Natural killer cell (primary cell): ENCODE measurements at regions of chr5 and their contacts with region 1.

Region 1: GRCh38 chr5:89168766-89169165 is 285.8 kb upstream of the MEF2C start:
- DNase-seq: no peak
- ATAC-seq: no peak
- H3K4me3 ChIP-seq: no peak overlapping the region
- H3K4me3 Mint-ChIP-seq: no peak overlapping the region
- H3K27ac ChIP-seq: no peak overlapping the region
- H3K27ac Mint-ChIP-seq: no peak overlapping the region
- H3K4me1 ChIP-seq: no peaks in the 10 kb centered on the region
- H3K4me1 Mint-ChIP-seq: peaks cover 0 to 9% of the 10 kb centered on the region in 2 donors
- H3K27me3 ChIP-seq: no peaks in the 10 kb centered on the region
- H3K27me3 Mint-ChIP-seq: no peaks in the 10 kb centered on the region
- CTCF ChIP-seq: no peak

Region 2: GRCh38 chr5:89117124-89117644 is 51.6 kb before region 1 on chr5:
- intact Hi-C with region 1: no loop called
- DNase-seq: no peak
- ATAC-seq: peak in 1 of 3 donors; percentile 52
- H3K4me3 ChIP-seq: no peak overlapping the region
- H3K4me3 Mint-ChIP-seq: no peak overlapping the region
- H3K27ac ChIP-seq: no peak overlapping the region
- H3K27ac Mint-ChIP-seq: no peak overlapping the region
- H3K4me1 ChIP-seq: peaks cover 3% of the 10 kb centered on the region
- H3K4me1 Mint-ChIP-seq: peaks cover 0 to 8% of the 10 kb centered on the region in 2 donors
- H3K27me3 ChIP-seq: no peaks in the 10 kb centered on the region
- H3K27me3 Mint-ChIP-seq: no peaks in the 10 kb centered on the region
- CTCF ChIP-seq: no peak

Region 3: DNA sequence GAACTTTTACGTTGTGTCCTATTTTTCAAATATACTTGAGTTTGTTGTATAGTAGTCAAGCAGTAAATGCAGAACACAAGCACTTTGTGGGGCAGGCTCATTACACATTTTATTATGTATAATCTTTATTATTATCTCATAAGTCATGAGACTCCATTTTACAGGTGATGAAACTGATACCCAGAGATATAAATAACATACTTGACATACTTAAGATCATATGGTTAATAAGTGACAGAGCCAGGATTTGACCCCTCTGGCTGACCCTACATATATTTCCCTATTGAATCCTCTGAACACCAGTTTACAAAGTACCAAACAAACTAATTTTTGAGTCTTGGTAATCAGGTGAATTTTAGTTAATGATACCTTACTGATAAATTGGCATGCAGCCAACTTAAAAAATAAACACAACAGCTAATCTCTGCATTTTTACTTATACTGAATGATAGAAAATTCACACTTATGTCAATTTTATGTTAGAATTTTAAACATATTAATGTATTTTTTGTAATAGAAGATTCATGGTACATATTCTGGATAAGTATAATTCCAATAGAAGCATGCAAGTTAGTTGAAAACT is 19.2 kb after region 1 on chr5:
- intact Hi-C with region 1: no loop called
- DNase-seq: no peak
- ATAC-seq: no peak
- H3K4me3 ChIP-seq: no peak overlapping the region
- H3K4me3 Mint-ChIP-seq: no peak overlapping the region
- H3K27ac ChIP-seq: no peak overlapping the region
- H3K27ac Mint-ChIP-seq: no peak overlapping the region
- H3K4me1 ChIP-seq: no peaks in the 10 kb centered on the region
- H3K4me1 Mint-ChIP-seq: no peaks in the 10 kb centered on the region
- H3K27me3 ChIP-seq: no peaks in the 10 kb centered on the region
- H3K27me3 Mint-ChIP-seq: no peaks in the 10 kb centered on the region
- CTCF ChIP-seq: no peak

Region 4: GRCh38 chr5:89216606-89217005 is 47.8 kb after region 1 on chr5:
- intact Hi-C with region 1: loop called (anchors 1 kb)
- DNase-seq: no peak
- ATAC-seq: no peak
- H3K4me3 ChIP-seq: no peak overlapping the region
- H3K4me3 Mint-ChIP-seq: no peak overlapping the region
- H3K27ac ChIP-seq: no peak overlapping the region
- H3K27ac Mint-ChIP-seq: no peak overlapping the region
- H3K4me1 ChIP-seq: no peaks in the 10 kb centered on the region
- H3K4me1 Mint-ChIP-seq: no peaks in the 10 kb centered on the region
- H3K27me3 ChIP-seq: no peaks in the 10 kb centered on the region
- H3K27me3 Mint-ChIP-seq: no peaks in the 10 kb centered on the region
- CTCF ChIP-seq: no peak